Heart right ventricle (tissue), 16 donors: ENCODE measurements at regions of chr4 and their contacts with region 1.

Region 1: GRCh38 chr4:52110171-52110570 is 59.1 kb downstream of the SPATA18 start:
- DNase-seq: no peak
- ATAC-seq: peak in 1 of 8 donors; percentile 33
- H3K4me3 ChIP-seq: no peak overlapping the region
- H3K27ac ChIP-seq: no peak overlapping the region
- H3K4me1 ChIP-seq: peaks cover 0 to 4% (median 0%) of the 10 kb centered on the region in 9 donors
- H3K27me3 ChIP-seq: peaks cover 0 to 2% (median 0%) of the 10 kb centered on the region in 7 donors
- CTCF ChIP-seq: no peak

Region 2: GRCh38 chr4:52172166-52172565 is 62.0 kb after region 1 on chr4:
- intact Hi-C with region 1: loop called in 1 of 10 experiments (anchors 10 kb)
- DNase-seq: no peak
- ATAC-seq: no peak
- H3K4me3 ChIP-seq: no peak overlapping the region
- H3K27ac ChIP-seq: no peak overlapping the region
- H3K4me1 ChIP-seq: peaks cover 0 to 18% (median 14%) of the 10 kb centered on the region in 9 donors
- H3K27me3 ChIP-seq: no peaks in the 10 kb centered on the region
- CTCF ChIP-seq: peak in 2 of 9 donors; percentile 13 to 22